ENCODE measurements at regions of chr5 and their contacts with region 1.

Region 1: DNA sequence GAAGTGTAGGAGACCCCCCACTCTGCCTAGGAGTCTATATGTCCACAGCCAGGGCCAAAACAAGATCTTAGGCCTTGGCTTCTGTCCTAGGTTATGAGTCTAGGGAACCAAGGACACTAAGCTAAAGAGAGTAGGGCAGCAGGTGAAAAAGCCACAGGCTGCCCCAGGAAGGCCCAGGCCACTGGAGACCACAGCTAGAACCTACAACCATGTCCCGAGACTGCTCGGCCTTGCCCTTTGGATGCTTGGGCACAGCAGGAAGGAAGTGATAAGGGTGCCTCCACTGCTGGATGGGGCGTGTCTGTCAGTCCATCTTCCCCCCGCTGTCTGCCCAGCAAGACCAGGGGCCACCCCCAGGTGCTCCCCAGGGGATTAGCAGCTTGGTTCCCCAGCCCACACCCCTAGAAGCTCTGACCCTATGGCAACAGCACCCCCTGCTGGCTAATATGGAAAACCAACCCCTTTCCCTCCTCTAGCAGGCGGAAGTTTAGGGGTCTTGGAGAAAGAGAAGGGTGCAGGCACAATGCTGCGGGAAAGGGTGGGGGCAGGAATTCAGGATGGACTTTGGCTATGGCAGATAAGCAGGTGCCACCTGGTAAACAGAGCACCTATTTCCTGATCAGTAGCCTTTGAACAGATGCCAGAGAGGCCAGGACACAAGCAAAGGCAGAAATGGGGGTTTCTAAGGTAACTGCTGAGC is 10.5 kb upstream of the IRF1 start:
- DNase-seq: peak; percentile 92
- ATAC-seq: peak; percentile 53
- H3K4me3 ChIP-seq: no peak overlapping the region
- H3K4me3 Mint-ChIP-seq: no peak overlapping the region
- H3K27ac ChIP-seq: peak overlapping the region; percentile 78 to 85
- H3K27ac Mint-ChIP-seq: peak overlapping the region; percentile 97
- H3K4me1 ChIP-seq: peaks cover 19 to 27% of the 10 kb centered on the region in 2 donors
- H3K4me1 Mint-ChIP-seq: peaks cover 37% of the 10 kb centered on the region
- H3K27me3 ChIP-seq: no peaks in the 10 kb centered on the region
- H3K27me3 Mint-ChIP-seq: no peaks in the 10 kb centered on the region
- CTCF ChIP-seq: peak; percentile 90

Region 2: GRCh38 chr5:132272311-132273210 is 228.5 kb before region 1 on chr5:
- CTCF ChIA-PET with region 1: interaction called, 10 read pairs
- POLR2A ChIA-PET with region 1: interaction called, 3 read pairs
- intact Hi-C with region 1: no loop called
- DNase-seq: peak; percentile 71
- ATAC-seq: peak; percentile 49
- H3K4me3 ChIP-seq: no peak overlapping the region
- H3K4me3 Mint-ChIP-seq: peak overlapping the region; percentile 59
- H3K27ac ChIP-seq: no peak overlapping the region
- H3K27ac Mint-ChIP-seq: no peak overlapping the region
- H3K4me1 ChIP-seq: peaks cover 10 to 12% of the 10 kb centered on the region in 2 donors
- H3K4me1 Mint-ChIP-seq: peaks cover 12% of the 10 kb centered on the region
- H3K27me3 ChIP-seq: peaks cover 0 to 23% (median 3%) of the 10 kb centered on the region in 4 experiments
- H3K27me3 Mint-ChIP-seq: peaks cover 18% of the 10 kb centered on the region
- CTCF ChIP-seq: peak; percentile 85

Region 3: DNA sequence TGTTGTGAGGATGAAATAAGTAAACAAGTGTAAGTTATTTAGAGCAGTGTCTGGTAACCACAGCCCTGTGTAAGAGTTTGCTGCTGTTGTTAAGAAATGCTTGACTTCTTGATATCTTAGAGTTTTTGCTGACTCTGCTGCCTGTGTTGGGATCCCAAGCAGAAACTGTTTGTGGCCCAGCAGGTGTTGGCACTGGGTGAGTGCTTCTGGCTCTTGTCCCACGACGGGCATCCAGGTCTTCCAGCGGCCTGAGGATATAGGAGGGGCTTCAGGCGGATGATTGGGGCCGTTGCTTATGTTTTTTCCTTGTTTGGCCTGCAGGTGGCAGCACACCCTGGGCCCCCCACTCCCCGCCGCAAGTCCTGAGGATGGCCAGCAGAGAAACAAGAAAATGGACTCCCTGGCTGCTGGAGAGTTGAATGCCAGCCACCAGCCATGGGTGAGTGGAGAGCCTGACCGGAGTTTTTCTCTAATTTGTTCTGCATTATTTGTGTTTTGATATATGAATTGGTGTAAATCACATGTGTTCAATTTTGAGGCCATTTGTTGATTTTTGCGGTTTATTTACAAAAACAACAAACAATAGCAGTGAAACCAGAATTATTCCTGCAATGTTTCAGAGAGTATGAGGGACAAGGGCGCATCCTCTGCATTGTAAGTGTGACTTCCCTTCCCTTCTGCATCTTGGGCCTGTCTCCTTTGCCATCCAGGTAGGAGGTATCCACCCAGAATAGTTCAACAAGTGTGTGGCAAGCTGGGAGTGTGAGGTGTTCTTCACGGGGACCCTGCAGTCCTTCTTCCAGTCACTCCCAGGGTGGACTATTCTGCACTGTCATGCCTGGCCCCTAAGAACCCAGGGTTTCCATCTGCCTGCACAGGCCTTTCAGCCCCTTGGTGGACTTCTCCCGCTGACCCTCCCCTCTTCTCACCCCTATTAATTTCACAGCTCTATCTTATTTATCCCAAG is 81.3 kb before region 1 on chr5:
- CTCF ChIA-PET with region 1: interaction called, 121 read pairs
- POLR2A ChIA-PET with region 1: interaction called, 37 read pairs
- intact Hi-C with region 1: loop called (anchors 1 kb)
- DNase-seq: peak; percentile 81
- ATAC-seq: peak; percentile 34
- H3K4me3 ChIP-seq: peak overlapping the region in 1 of 5 experiments; percentile 51
- H3K4me3 Mint-ChIP-seq: peak overlapping the region; percentile 90
- H3K27ac ChIP-seq: peak overlapping the region; percentile 92 to 94
- H3K27ac Mint-ChIP-seq: peak overlapping the region; percentile 93
- H3K4me1 ChIP-seq: peaks cover 90 to 91% of the 10 kb centered on the region in 2 donors
- H3K4me1 Mint-ChIP-seq: peaks cover 95% of the 10 kb centered on the region
- H3K27me3 ChIP-seq: no peaks in the 10 kb centered on the region
- H3K27me3 Mint-ChIP-seq: no peaks in the 10 kb centered on the region
- CTCF ChIP-seq: peak; percentile 91

Region 4: GRCh38 chr5:132466433-132467286 is 34.4 kb before region 1 on chr5:
- CTCF ChIA-PET with region 1: interaction called, 23 read pairs
- POLR2A ChIA-PET with region 1: interaction called, 41 read pairs
- intact Hi-C with region 1: no loop called
- DNase-seq: peak; percentile 72
- ATAC-seq: peak; percentile 61
- H3K4me3 ChIP-seq: peak overlapping the region; percentile 10 to 53 (median 35)
- H3K4me3 Mint-ChIP-seq: peak overlapping the region; percentile 62
- H3K27ac ChIP-seq: peak overlapping the region; percentile 70 to 72
- H3K27ac Mint-ChIP-seq: peak overlapping the region; percentile 77
- H3K4me1 ChIP-seq: peaks cover 71 to 83% of the 10 kb centered on the region in 2 donors
- H3K4me1 Mint-ChIP-seq: peaks cover 85% of the 10 kb centered on the region
- H3K27me3 ChIP-seq: no peaks in the 10 kb centered on the region
- H3K27me3 Mint-ChIP-seq: no peaks in the 10 kb centered on the region
- CTCF ChIP-seq: no peak

Region 5: GRCh38 chr5:132526290-132526973 is 25.4 kb after region 1 on chr5:
- CTCF ChIA-PET with region 1: interaction called, 17 read pairs
- POLR2A ChIA-PET with region 1: no interaction called
- intact Hi-C with region 1: no loop called
- DNase-seq: peak; percentile 71
- ATAC-seq: peak; percentile 53
- H3K4me3 ChIP-seq: no peak overlapping the region
- H3K4me3 Mint-ChIP-seq: peak overlapping the region; percentile 8
- H3K27ac ChIP-seq: no peak overlapping the region
- H3K27ac Mint-ChIP-seq: no peak overlapping the region
- H3K4me1 ChIP-seq: peaks cover 41 to 45% of the 10 kb centered on the region in 2 donors
- H3K4me1 Mint-ChIP-seq: peaks cover 49% of the 10 kb centered on the region
- H3K27me3 ChIP-seq: no peaks in the 10 kb centered on the region
- H3K27me3 Mint-ChIP-seq: no peaks in the 10 kb centered on the region
- CTCF ChIP-seq: peak; percentile 89

Region 6: GRCh38 chr5:132540764-132541163 is 39.7 kb after region 1 on chr5:
- CTCF ChIA-PET with region 1: no interaction called
- POLR2A ChIA-PET with region 1: no interaction called
- intact Hi-C with region 1: no loop called
- DNase-seq: no peak
- ATAC-seq: no peak
- H3K4me3 ChIP-seq: no peak overlapping the region
- H3K4me3 Mint-ChIP-seq: no peak overlapping the region
- H3K27ac ChIP-seq: no peak overlapping the region
- H3K27ac Mint-ChIP-seq: no peak overlapping the region
- H3K4me1 ChIP-seq: no peaks in the 10 kb centered on the region
- H3K4me1 Mint-ChIP-seq: no peaks in the 10 kb centered on the region
- H3K27me3 ChIP-seq: peaks cover 0 to 8% (median under 1%) of the 10 kb centered on the region in 4 experiments
- H3K27me3 Mint-ChIP-seq: peaks cover 17% of the 10 kb centered on the region
- CTCF ChIP-seq: no peak

Region 7: GRCh38 chr5:132639706-132640130 is 138.6 kb after region 1 on chr5:
- CTCF ChIA-PET with region 1: no interaction called
- POLR2A ChIA-PET with region 1: no interaction called
- intact Hi-C with region 1: no loop called
- DNase-seq: no peak
- ATAC-seq: no peak
- H3K4me3 ChIP-seq: no peak overlapping the region
- H3K4me3 Mint-ChIP-seq: no peak overlapping the region
- H3K27ac ChIP-seq: no peak overlapping the region
- H3K27ac Mint-ChIP-seq: no peak overlapping the region
- H3K4me1 ChIP-seq: no peaks in the 10 kb centered on the region
- H3K4me1 Mint-ChIP-seq: no peaks in the 10 kb centered on the region
- H3K27me3 ChIP-seq: no peaks in the 10 kb centered on the region
- H3K27me3 Mint-ChIP-seq: no peaks in the 10 kb centered on the region
- CTCF ChIP-seq: no peak

Region 8: GRCh38 chr5:132883261-132883834 is 382.3 kb after region 1 on chr5:
- CTCF ChIA-PET with region 1: interaction called, 9 read pairs
- POLR2A ChIA-PET with region 1: no interaction called
- intact Hi-C with region 1: loop called (anchors 5 kb)
- DNase-seq: peak; percentile 69
- ATAC-seq: peak; percentile 53
- H3K4me3 ChIP-seq: no peak overlapping the region
- H3K4me3 Mint-ChIP-seq: no peak overlapping the region
- H3K27ac ChIP-seq: no peak overlapping the region
- H3K27ac Mint-ChIP-seq: no peak overlapping the region
- H3K4me1 ChIP-seq: no peaks in the 10 kb centered on the region
- H3K4me1 Mint-ChIP-seq: peaks cover 8% of the 10 kb centered on the region
- H3K27me3 ChIP-seq: no peaks in the 10 kb centered on the region
- H3K27me3 Mint-ChIP-seq: no peaks in the 10 kb centered on the region
- CTCF ChIP-seq: peak; percentile 78